Prostate gland (tissue), 2 donors: ENCODE measurements at regions of chr11 and their contacts with region 1.

Region 1: GRCh38 chr11:131674051-131674755 is 303.8 kb downstream of the NTM start:
- DNase-seq: peak; percentile 48
- H3K4me3 ChIP-seq: no peak overlapping the region
- H3K27ac ChIP-seq: no peak overlapping the region
- H3K4me1 ChIP-seq: no peaks in the 10 kb centered on the region
- H3K27me3 ChIP-seq: no peaks in the 10 kb centered on the region
- CTCF ChIP-seq: peak; percentile 70 to 89 (median 84)
- POLR2A ChIP-seq: no peak

Region 2: GRCh38 chr11:130924770-130925169 is 749.4 kb before region 1 on chr11:
- intact Hi-C with region 1: loop called (anchors 5 kb)
- DNase-seq: no peak
- H3K4me3 ChIP-seq: no peak overlapping the region
- H3K27ac ChIP-seq: no peak overlapping the region
- H3K4me1 ChIP-seq: no peaks in the 10 kb centered on the region
- H3K27me3 ChIP-seq: no peaks in the 10 kb centered on the region
- CTCF ChIP-seq: no peak
- POLR2A ChIP-seq: no peak

Region 3: DNA sequence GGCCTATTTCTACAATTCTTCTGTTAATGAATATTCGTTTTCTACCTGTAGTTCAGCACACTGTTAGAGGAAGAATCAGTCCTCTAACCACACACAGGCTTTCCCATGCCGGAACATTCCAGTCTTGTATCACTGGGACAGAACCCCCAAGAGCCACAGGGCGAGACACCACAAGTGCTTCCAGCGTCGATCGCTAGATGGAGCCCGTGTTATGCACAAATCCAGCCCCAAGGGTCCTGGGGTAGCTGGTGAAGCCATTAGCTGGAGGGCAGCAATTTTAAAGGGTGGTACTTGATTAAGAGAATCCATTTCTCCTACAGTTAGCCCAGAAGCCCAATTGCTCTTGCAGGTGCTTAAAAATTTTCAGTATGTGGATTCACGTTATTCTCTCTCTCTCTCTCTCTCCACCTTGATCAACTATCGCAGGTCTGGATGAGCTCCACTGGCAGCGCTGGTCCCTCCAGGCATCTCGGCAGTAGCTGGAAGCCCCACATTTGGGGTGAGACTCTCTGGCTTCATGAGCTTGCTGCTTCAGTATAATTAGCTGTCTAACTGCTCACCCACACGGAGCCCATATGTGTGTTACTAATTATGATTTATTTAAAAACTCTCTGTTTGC is 609.7 kb before region 1 on chr11:
- intact Hi-C with region 1: loop called (anchors 2 kb)
- DNase-seq: peak; percentile 25
- H3K4me3 ChIP-seq: no peak overlapping the region
- H3K27ac ChIP-seq: no peak overlapping the region
- H3K4me1 ChIP-seq: no peaks in the 10 kb centered on the region
- H3K27me3 ChIP-seq: no peaks in the 10 kb centered on the region
- CTCF ChIP-seq: peak in 3 of 4 experiments; percentile 62 to 66 (median 62)
- POLR2A ChIP-seq: no peak

Region 4: GRCh38 chr11:131629925-131630540 is 44.2 kb before region 1 on chr11:
- intact Hi-C with region 1: no loop called
- DNase-seq: no peak
- H3K4me3 ChIP-seq: no peak overlapping the region
- H3K27ac ChIP-seq: no peak overlapping the region
- H3K4me1 ChIP-seq: no peaks in the 10 kb centered on the region
- H3K27me3 ChIP-seq: no peaks in the 10 kb centered on the region
- CTCF ChIP-seq: no peak
- POLR2A ChIP-seq: no peak